H1 (cell line): ENCODE measurements at regions of chr3 and their contacts with region 1.

Region 1: GRCh38 chr3:75192146-75192616 is 471.9 kb upstream of the FRG2C start:
- DNase-seq: peak in 1 of 2 experiments; percentile 82
- H3K4me3 ChIP-seq: no peak overlapping the region
- H3K27ac ChIP-seq: no peak overlapping the region
- H3K4me1 ChIP-seq: peaks cover 0 to 5% (median 0%) of the 10 kb centered on the region in 4 experiments; a peak in 2 of 7 replicates
- H3K27me3 ChIP-seq: no peaks in the 10 kb centered on the region
- CTCF ChIP-seq: peak in 2 of 3 experiments; percentile 74 to 86; a peak in 3 of 4 replicates
- EP300 ChIP-seq: no peak
- POLR2A ChIP-seq: no peak
- RAD21 ChIP-seq: peak; percentile 71 to 82

Region 2: DNA sequence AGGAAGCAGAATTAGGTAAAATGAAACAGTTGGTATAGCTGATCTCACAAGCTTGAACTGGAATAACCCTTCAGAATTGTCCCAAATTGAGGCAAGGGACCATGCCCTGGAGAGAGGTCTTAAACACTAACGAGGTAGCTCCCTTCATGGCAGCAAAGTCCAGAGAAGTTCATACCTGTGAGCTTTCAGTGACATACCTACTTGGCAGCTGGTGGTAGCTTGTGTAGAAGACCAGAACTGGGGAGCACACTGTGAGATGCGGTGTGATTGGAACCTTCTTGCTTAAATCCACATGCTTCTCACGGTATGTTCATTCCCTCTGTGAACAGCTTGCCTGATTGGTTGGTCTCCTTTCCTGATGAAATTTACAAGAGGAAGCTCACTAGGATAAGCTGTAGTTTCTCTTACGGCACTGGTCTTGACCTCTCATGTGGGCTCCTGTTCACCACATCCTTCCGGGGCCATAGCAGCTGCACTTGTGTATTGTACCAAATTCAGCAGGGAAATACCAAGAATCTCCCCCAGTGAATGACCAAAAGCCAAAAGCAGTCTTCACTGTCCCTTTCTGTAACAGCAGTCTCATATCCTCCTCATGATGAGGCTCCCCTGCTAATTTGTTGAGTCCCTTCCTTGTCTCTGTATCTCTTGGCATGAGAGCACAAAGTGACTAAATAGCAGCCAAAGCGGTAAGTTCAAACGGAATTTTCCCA is 11.8 kb before region 1 on chr3:
- CTCF ChIA-PET with region 1: interaction called, 22 read pairs
- POLR2A ChIA-PET with region 1: no interaction called
- DNase-seq: no peak
- H3K4me3 ChIP-seq: no peak overlapping the region
- H3K27ac ChIP-seq: no peak overlapping the region
- H3K4me1 ChIP-seq: peaks cover 0 to 4% (median 0%) of the 10 kb centered on the region in 4 experiments; a peak in 3 of 7 replicates
- H3K27me3 ChIP-seq: no peaks in the 10 kb centered on the region
- CTCF ChIP-seq: no peak
- EP300 ChIP-seq: no peak
- POLR2A ChIP-seq: no peak
- RAD21 ChIP-seq: no peak

Region 3: GRCh38 chr3:75254685-75255084 is 62.5 kb after region 1 on chr3:
- CTCF ChIA-PET with region 1: interaction called, 15 read pairs
- POLR2A ChIA-PET with region 1: no interaction called
- DNase-seq: peak; percentile 10 to 50
- H3K4me3 ChIP-seq: 0 out of 8 replicates have a peak overlapping the region, but pooled peaks of 1 of the 4 experiments have one; percentile 15
- H3K27ac ChIP-seq: peak overlapping the region; percentile 71; the same call in 1 of the 2 replicates
- H3K4me1 ChIP-seq: peaks cover 0 to 6% (median 2%) of the 10 kb centered on the region in 4 experiments; a peak in 4 of 7 replicates
- H3K27me3 ChIP-seq: no peaks in the 10 kb centered on the region
- CTCF ChIP-seq: no peak
- EP300 ChIP-seq: no peak; a peak in 1 of 3 replicates
- POLR2A ChIP-seq: no peak
- RAD21 ChIP-seq: no peak